IMR-90 (cell line): ENCODE measurements at regions of chr10 and their contacts with region 1.

Region 1: GRCh38 chr10:94607111-94607510 is 61.5 kb downstream of the HELLS start:
- DNase-seq: no peak
- ATAC-seq: no peak
- H3K4me3 ChIP-seq: no peak overlapping the region
- H3K27ac ChIP-seq: no peak overlapping the region
- H3K4me1 ChIP-seq: no peaks in the 10 kb centered on the region
- H3K27me3 ChIP-seq: no peaks in the 10 kb centered on the region
- CTCF ChIP-seq: no peak
- POLR2A ChIP-seq: no peak
- RAD21 ChIP-seq: no peak

Region 2: DNA sequence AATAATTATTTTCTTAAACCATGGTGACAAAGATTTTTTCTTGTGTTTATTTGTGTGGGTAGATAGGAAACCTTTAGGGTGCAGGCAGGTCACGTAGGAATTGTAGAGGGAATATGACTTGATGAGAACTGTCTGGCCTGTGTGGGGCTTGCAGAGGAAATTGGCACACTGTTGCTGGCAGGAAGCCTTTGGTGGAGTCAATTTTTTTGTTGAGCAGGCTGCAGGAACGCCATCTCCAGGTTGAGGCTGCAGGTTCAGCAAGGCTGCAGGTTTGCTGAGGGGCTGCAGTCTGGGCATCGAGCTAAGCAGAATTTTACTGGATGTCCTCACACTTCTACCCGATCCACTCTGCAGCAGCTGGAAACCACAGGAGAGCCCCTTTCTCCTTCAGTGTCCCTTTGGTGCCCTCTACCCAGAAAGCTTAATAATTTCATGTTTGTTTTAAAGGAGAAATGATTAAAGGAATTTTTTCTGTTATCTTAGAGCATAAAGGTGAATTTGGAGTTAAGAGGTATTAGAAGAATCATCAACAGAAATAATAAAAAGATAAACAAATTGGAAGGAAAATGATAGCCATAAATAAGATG is 167.7 kb before region 1 on chr10:
- CTCF ChIA-PET with region 1: no interaction called
- POLR2A ChIA-PET with region 1: no interaction called
- dilution Hi-C with region 1: no loop called
- in situ Hi-C with region 1: no loop called
- intact Hi-C with region 1: no loop called
- DNase-seq: peak; percentile 3
- ATAC-seq: no peak
- H3K4me3 ChIP-seq: no peak overlapping the region
- H3K27ac ChIP-seq: no peak overlapping the region
- H3K4me1 ChIP-seq: no peaks in the 10 kb centered on the region; the same call in 1 of the 2 replicates
- H3K27me3 ChIP-seq: no peaks in the 10 kb centered on the region
- CTCF ChIP-seq: no peak
- POLR2A ChIP-seq: no peak
- RAD21 ChIP-seq: no peak

Region 3: GRCh38 chr10:94571528-94571927 is 35.6 kb before region 1 on chr10:
- CTCF ChIA-PET with region 1: no interaction called
- POLR2A ChIA-PET with region 1: no interaction called
- dilution Hi-C with region 1: no loop called
- in situ Hi-C with region 1: no loop called
- intact Hi-C with region 1: no loop called
- DNase-seq: peak; percentile 58
- ATAC-seq: no peak
- H3K4me3 ChIP-seq: no peak overlapping the region
- H3K27ac ChIP-seq: no peak overlapping the region
- H3K4me1 ChIP-seq: no peaks in the 10 kb centered on the region
- H3K27me3 ChIP-seq: no peaks in the 10 kb centered on the region
- CTCF ChIP-seq: no peak
- POLR2A ChIP-seq: no peak
- RAD21 ChIP-seq: no peak

Region 4: GRCh38 chr10:95374597-95375209 is 767.6 kb after region 1 on chr10:
- CTCF ChIA-PET with region 1: no interaction called
- POLR2A ChIA-PET with region 1: no interaction called
- dilution Hi-C with region 1: no loop called
- in situ Hi-C with region 1: loop called (anchors 25 kb)
- intact Hi-C with region 1: no loop called
- DNase-seq: peak; percentile 57
- ATAC-seq: peak; percentile 84; the same call in 1 of the 2 replicates
- H3K4me3 ChIP-seq: no peak overlapping the region
- H3K27ac ChIP-seq: no peak overlapping the region
- H3K4me1 ChIP-seq: no peaks in the 10 kb centered on the region
- H3K27me3 ChIP-seq: peaks cover 30% of the 10 kb centered on the region
- CTCF ChIP-seq: peak; percentile 63
- POLR2A ChIP-seq: no peak
- RAD21 ChIP-seq: peak; percentile 67